Dendritic cell treated with granulocyte-macrophage colony-stimulating factor and Interleukin-4, amounts not matched to agents 40 ng/mL and 50 ng/mL, for 4 days (primary cell): ENCODE measurements at regions of chr12 and their contacts with region 1.

Region 1: DNA sequence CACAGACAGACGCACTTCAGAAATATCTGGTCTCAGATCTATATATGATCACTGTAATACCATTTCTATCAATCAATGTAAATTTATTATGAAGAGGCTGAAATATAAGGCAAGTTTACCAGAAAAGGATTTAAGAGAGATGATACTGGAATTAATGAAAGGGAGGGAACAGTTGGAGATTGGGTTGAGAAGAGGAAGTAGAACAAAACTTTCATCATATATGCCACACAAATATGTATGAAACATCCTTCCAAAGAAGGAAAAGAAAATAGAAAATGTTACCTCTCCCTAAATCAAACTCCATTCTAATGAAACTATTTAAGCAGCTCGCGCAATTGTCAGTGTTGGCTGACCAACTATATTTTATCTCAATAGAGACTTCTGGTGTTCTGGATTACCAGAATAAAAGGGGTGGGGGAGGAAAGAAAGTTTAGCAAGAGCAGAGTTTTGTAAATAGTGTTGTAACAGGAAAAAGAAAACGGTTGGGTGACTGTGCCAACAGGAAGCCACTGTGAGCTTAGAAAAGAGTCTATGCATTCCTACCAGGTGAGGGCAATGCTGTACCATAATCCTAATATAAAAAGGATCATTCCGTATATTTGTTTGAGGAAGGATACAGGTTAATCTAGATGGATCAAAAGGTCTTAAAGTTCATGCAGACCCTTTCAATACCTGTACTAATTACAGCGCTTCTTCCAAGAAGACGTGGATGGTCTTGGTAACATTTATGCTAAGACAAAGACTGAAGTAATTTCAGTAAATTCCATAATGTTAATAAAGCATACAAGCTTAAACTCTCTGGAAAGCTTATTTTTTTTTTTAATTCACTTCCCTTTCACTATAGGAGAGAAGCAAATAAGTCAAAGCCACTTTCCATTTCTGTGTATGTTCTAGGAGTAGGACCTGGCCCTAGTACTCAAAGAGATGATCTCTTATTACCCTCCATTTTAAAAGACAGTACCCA is 14.5 kb upstream of the LLPH start:
- H3K4me3 Mint-ChIP-seq: peak overlapping the region; percentile 9
- H3K27ac Mint-ChIP-seq: peak overlapping the region; percentile 76
- H3K4me1 Mint-ChIP-seq: peaks cover 34% of the 10 kb centered on the region
- H3K27me3 Mint-ChIP-seq: no peaks in the 10 kb centered on the region

Region 2: DNA sequence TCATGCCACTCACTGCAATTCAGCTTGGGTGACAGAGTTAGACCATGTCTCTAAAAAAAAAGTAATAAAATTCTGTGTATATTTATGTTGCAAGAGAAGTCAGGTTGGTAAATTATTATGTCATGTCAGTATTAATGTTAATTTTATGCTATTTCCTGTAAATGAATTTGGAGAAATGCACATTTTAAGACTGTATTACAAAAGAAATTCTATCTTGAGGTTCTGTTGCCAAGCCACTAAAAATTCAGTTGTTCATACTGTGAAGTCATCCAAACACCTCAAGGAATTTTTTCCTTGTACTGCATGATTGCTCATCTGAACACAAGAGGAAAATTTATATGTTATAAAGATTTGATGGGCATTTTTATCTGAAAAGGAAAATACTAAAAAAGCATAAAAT is 344.1 kb before region 1 on chr12:
- intact Hi-C with region 1: no loop called
- H3K4me3 Mint-ChIP-seq: no peak overlapping the region
- H3K27ac Mint-ChIP-seq: no peak overlapping the region
- H3K4me1 Mint-ChIP-seq: peaks cover 6% of the 10 kb centered on the region
- H3K27me3 Mint-ChIP-seq: no peaks in the 10 kb centered on the region

Region 3: DNA sequence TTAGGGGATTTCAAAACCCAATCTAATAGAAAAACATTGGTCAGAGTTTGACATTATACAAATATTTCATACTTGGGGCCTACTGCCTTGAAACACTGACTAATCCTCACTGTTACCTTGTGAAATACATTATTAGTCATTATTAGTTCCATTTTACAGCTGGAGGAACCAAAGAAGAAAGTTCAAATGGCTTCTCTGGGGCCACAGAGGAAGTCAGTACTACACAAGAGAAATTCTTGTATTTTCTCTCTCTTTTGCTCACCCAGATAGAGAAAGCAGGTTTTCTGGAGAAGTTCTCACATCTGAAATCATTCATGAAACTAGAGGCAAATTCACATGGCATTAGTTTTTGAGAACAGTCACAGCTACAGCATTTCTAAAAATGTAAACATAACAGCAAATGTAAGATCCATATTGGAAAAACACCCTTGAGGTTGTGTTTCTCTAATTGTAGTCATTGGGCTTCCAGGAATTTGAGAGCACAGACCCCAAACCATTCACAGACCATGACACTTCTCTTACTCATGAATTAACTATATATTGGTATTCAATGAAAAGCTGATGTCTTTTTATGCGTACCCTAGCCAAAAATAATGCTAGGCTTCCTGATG is 97.6 kb before region 1 on chr12:
- intact Hi-C with region 1: no loop called
- H3K4me3 Mint-ChIP-seq: no peak overlapping the region
- H3K27ac Mint-ChIP-seq: no peak overlapping the region
- H3K4me1 Mint-ChIP-seq: peaks cover 5% of the 10 kb centered on the region
- H3K27me3 Mint-ChIP-seq: peaks cover 2% of the 10 kb centered on the region

Region 4: DNA sequence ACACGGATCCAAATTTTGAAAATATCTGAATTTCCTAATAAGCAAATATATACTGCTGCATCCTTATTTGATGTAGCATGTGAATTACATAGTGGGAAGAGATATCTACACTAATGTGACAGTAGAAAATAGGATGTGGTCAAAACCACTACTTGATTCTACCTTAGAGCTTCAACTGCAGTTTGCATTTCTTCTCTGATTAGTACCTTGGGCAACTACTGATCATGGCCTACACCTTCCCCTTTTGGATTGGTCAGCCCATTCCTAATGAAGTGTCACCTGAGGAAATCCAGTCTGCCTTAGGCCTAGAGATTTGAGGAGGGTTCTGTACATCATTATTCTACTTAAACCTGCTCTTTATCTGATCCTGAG is 25.2 kb before region 1 on chr12:
- intact Hi-C with region 1: no loop called
- H3K4me3 Mint-ChIP-seq: no peak overlapping the region
- H3K27ac Mint-ChIP-seq: no peak overlapping the region
- H3K4me1 Mint-ChIP-seq: peaks cover 6% of the 10 kb centered on the region
- H3K27me3 Mint-ChIP-seq: no peaks in the 10 kb centered on the region

Region 5: GRCh38 chr12:66188584-66189485 is 43.8 kb after region 1 on chr12 and contains the start of gene IRAK3:
- intact Hi-C with region 1: loop called (anchors 5 kb)
- H3K4me3 Mint-ChIP-seq: peak within 1 kb of the TSS; percentile 83
- H3K27ac Mint-ChIP-seq: peak within 1 kb of the TSS; percentile 97
- H3K4me1 Mint-ChIP-seq: peaks cover 50% of the 10 kb centered on the region
- H3K27me3 Mint-ChIP-seq: no peaks in the 10 kb centered on the region

Region 6: DNA sequence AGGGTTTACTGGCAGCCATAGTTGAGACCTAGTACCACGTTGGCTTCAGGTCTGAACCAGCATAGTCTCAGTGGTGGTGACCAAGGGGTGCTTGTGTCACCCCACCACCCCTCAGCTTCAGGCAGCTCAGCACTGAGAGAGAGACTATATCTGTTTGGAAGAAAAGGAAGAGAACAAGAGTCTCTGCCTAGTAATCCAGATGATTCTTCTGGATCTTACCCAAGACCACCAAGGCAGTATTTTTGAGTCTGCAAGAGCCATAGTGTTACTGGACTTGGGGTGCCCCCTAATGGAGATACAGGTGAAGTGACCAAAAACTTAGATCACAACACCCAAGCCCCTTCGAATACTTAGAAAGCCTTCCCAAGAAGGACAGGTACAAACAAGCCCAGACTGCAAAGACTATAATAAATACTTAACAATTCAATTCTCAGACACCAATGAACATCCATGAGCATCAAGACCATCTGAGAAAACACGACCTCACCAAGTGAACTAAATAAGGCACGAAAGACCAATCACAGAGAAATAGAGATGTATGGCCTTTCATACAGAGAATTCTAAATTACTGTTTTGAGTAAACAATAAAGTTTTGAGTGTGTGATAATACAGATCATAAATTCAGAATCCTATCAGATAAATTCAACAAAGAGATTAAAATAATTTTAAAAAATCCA is 264.3 kb after region 1 on chr12:
- intact Hi-C with region 1: loop called (anchors 10 kb)
- H3K4me3 Mint-ChIP-seq: no peak overlapping the region
- H3K27ac Mint-ChIP-seq: peak overlapping the region; percentile 35
- H3K4me1 Mint-ChIP-seq: peaks cover 26% of the 10 kb centered on the region
- H3K27me3 Mint-ChIP-seq: no peaks in the 10 kb centered on the region

Region 7: GRCh38 chr12:66693901-66694675 is 549.0 kb after region 1 on chr12:
- intact Hi-C with region 1: loop called (anchors 10 kb)
- H3K4me3 Mint-ChIP-seq: no peak overlapping the region
- H3K27ac Mint-ChIP-seq: no peak overlapping the region
- H3K4me1 Mint-ChIP-seq: peaks cover 20% of the 10 kb centered on the region
- H3K27me3 Mint-ChIP-seq: no peaks in the 10 kb centered on the region